Heart right ventricle (tissue), 16 donors: ENCODE measurements at regions of chr1 and their contacts with region 1.

Region 1: DNA sequence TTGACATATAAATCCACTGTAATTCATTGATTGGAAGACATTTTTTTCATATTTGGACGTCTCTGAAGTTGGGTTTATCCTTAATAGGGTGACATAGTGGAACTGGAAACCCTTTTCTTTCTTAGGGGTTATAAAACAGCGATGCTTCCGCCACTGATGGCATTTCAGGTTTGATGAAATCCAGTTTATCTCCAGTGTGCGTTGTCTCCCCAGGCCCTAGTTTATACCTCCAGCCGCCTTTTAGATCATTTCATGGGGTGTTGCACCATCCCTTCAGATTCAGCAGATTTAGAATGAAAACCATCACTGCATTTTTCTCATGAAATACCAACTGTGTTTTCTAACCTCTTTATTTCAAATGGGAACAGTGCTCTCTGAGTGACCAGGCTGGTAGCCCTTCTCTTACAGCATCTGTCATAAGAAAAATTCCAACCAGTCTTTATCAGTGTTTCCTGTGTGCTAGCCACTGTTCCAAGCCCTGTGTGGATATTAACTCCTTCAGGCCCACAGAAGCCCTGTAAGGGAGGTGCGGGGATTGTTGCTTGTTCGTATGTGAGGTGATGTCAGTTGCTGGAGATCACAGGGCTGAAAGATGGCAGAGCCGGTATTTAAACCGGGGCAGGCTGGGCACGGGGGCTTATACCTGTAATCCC is 19.0 kb downstream of the H6PD start:
- DNase-seq: no peak
- ATAC-seq: peak in 7 of 8 donors; percentile 13 to 63 (median 31)
- H3K4me3 ChIP-seq: no peak overlapping the region
- H3K27ac ChIP-seq: peak overlapping the region; percentile 32 to 84 (median 78)
- H3K4me1 ChIP-seq: peaks cover 20 to 76% (median 55%) of the 10 kb centered on the region in 9 donors
- H3K27me3 ChIP-seq: no peaks in the 10 kb centered on the region
- CTCF ChIP-seq: no peak

Region 2: GRCh38 chr1:9234223-9235095 is 19.1 kb before region 1 on chr1 and contains the start of gene H6PD:
- intact Hi-C with region 1: loop called in 1 of 10 experiments (anchors 2 kb)
- DNase-seq: peak; percentile 86 to 91
- ATAC-seq: peak; percentile 71 to 89 (median 82)
- H3K4me3 ChIP-seq: peak within 1 kb of the TSS; percentile 40 to 78 (median 66)
- H3K27ac ChIP-seq: peak within 1 kb of the TSS; percentile 91 to 99 (median 95)
- H3K4me1 ChIP-seq: peaks cover 2 to 65% (median 54%) of the 10 kb centered on the region in 9 donors
- H3K27me3 ChIP-seq: no peaks in the 10 kb centered on the region
- CTCF ChIP-seq: peak; percentile 68 to 84 (median 71)
- total RNA-seq, gene H6PD: 22.3 to 45.0 (median 29.3) TPM

Region 3: GRCh38 chr1:9438431-9439073 is 185.0 kb after region 1 on chr1:
- intact Hi-C with region 1: no loop called
- DNase-seq: peak; percentile 26 to 32
- ATAC-seq: peak in 7 of 8 donors; percentile 15 to 62 (median 30)
- H3K4me3 ChIP-seq: no peak overlapping the region
- H3K27ac ChIP-seq: peak overlapping the region in 9 of 10 donors; percentile 9 to 91 (median 56)
- H3K4me1 ChIP-seq: peaks cover 5 to 91% (median 50%) of the 10 kb centered on the region in 9 donors
- H3K27me3 ChIP-seq: no peaks in the 10 kb centered on the region
- CTCF ChIP-seq: no peak